CD4-positive, alpha-beta T cell (primary cell): ENCODE measurements at regions of chr16 and their contacts with region 1.

Region 1: DNA sequence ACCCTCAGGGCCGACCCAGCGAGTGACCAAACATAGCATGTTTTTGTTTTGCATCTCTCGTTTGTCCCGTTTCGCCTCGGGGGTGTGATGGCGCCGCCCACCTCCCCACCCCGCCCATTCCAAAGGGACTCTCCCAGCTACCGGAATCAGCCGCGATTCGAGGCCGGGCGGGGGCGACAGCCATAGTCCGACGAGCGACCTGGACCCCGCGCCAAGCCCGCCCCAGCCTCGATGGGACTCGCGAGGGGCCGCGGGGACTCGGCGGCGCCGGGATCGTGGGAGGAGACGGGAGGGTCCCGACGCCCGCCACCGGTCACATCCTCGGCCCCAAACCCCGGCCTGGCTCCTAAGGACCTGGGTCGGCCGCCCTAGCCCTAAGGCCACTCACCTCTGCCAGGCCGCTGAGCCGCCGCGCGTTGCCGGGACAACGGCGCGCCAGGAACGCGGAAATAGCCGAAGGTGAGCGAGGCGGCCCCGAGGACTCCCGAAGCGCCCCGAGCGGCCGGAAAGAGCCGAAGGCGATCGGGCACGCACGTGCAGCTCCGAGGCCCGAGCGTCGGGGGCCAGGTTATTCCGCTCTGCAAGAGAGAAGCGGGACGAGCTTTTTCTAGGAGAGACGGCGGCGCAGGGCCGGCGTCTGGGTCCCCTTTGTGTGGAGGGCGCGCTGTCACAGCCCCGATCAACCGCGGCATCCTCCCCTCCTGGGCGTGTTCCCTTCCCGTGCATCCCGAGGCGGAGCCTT is 1.4 kb downstream of the IFT140 start:
- DNase-seq: peak; percentile 85 to 96 (median 90)
- ATAC-seq: peak; percentile 65
- H3K4me3 ChIP-seq: peak overlapping the region; percentile 53
- H3K4me3 Mint-ChIP-seq: peak overlapping the region; percentile 72
- H3K27ac ChIP-seq: peak overlapping the region; percentile 45 to 46
- H3K27ac Mint-ChIP-seq: peak overlapping the region; percentile 89
- H3K4me1 ChIP-seq: peaks cover 44% of the 10 kb centered on the region
- H3K4me1 Mint-ChIP-seq: peaks cover 24% of the 10 kb centered on the region
- H3K27me3 ChIP-seq: peaks cover 6 to 10% of the 10 kb centered on the region in 2 experiments
- H3K27me3 Mint-ChIP-seq: peaks cover 14% of the 10 kb centered on the region
- CTCF ChIP-seq: no peak

Region 2: GRCh38 chr16:1474796-1475551 is 135.5 kb before region 1 on chr16 and contains the start of gene CLCN7:
- CTCF ChIA-PET with region 1: no interaction called
- POLR2A ChIA-PET with region 1: interaction called, 3 read pairs
- intact Hi-C with region 1: loop called in 1 of 2 experiments (anchors 5 kb)
- DNase-seq: peak; percentile 70 to 94 (median 84)
- ATAC-seq: peak; percentile 87
- H3K4me3 ChIP-seq: peak within 1 kb of the TSS; percentile 62
- H3K4me3 Mint-ChIP-seq: peak within 1 kb of the TSS; percentile 88
- H3K27ac ChIP-seq: peak within 1 kb of the TSS; percentile 72 to 84
- H3K27ac Mint-ChIP-seq: peak within 1 kb of the TSS; percentile 89
- H3K4me1 ChIP-seq: peaks cover 41% of the 10 kb centered on the region
- H3K4me1 Mint-ChIP-seq: peaks cover 43% of the 10 kb centered on the region
- H3K27me3 ChIP-seq: no peaks in the 10 kb centered on the region
- H3K27me3 Mint-ChIP-seq: no peaks in the 10 kb centered on the region
- CTCF ChIP-seq: no peak
- total RNA-seq, gene CLCN7: 70.5 to 76.2 TPM

Region 3: DNA sequence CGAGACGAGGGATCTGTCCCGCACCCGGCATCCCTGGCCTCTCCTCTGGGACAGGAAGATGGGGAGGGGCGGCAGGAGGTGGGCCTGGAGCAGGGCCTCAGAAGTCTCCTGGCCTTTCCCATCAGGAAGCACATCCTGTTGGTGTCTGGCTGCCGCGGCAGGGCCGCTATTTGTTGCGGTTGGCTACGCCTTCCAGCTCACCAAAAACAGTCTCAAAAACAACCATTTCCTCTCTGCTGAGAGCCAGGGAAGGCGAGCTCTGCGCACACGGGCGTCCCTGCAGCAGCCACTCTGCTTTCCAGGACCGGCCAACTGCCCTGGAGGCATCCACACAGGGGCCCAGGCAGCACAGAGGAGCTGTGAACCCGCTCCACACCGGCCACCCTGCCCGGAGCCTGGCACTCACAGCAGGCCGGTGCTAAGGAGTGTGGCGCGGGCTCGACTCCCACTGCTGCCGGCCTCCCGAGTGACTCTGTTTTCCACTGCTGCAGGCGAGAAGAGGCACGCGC is 77.0 kb before region 1 on chr16 and contains the start of gene TMEM204:
- CTCF ChIA-PET with region 1: no interaction called
- POLR2A ChIA-PET with region 1: interaction called, 4 read pairs
- intact Hi-C with region 1: loop called in 1 of 2 experiments (anchors 1 kb)
- DNase-seq: peak in 13 of 14 experiments; percentile 40 to 75 (median 58)
- ATAC-seq: peak; percentile 47
- H3K4me3 ChIP-seq: peak within 1 kb of the TSS; percentile 98
- H3K4me3 Mint-ChIP-seq: peak within 1 kb of the TSS; percentile 99
- H3K27ac ChIP-seq: peak within 1 kb of the TSS; percentile 55 to 56
- H3K27ac Mint-ChIP-seq: peak within 1 kb of the TSS; percentile 98
- H3K4me1 ChIP-seq: peaks cover 64% of the 10 kb centered on the region
- H3K4me1 Mint-ChIP-seq: peaks cover 59% of the 10 kb centered on the region
- H3K27me3 ChIP-seq: no peaks in the 10 kb centered on the region
- H3K27me3 Mint-ChIP-seq: no peaks in the 10 kb centered on the region
- CTCF ChIP-seq: no peak
- total RNA-seq, gene TMEM204: 20.5 to 22.1 TPM

Region 4: DNA sequence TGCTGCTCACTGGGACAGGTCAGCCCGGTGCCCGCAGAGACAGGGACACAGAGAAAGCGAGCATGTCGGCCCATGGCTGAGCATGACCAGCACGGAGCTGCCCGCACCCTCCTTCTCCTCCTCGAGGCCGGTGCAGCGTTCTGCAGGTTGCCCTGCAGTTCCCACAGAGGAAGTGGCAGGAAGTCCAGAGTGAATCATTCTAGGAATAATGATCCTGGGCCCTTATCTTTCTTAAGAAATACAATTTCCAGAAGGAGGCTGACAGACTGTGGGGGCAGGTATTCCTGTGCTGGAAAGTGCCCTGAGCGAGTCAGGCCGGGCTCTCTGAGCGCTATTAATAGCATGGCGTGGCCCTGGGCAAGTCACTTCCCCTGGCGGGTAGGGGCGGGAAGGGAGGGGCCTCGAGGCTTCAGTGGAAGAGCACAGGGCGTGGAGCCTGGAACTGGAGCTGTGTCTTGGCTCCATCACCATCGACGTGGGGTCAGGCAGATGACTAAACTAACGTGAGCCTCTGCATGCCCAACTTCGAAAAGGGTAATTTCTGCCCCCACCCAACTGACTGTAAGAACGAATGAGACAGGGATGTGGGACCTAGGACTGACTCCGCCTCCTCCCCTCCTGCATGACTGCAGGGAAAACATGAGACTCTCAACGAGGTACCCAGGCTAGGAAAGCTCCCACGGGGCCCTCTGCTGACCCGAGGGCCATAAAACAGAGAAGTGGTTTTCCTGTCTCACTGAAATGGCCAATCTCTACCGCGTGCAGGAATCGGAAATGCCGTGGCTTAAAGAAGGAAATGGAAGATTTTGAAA is 67.2 kb before region 1 on chr16:
- CTCF ChIA-PET with region 1: no interaction called
- POLR2A ChIA-PET with region 1: interaction called, 3 read pairs
- intact Hi-C with region 1: loop called in 1 of 2 experiments (anchors 2 kb)
- DNase-seq: peak in 9 of 14 experiments; percentile 24 to 76 (median 45)
- ATAC-seq: peak; percentile 66
- H3K4me3 ChIP-seq: peak overlapping the region; percentile 10
- H3K4me3 Mint-ChIP-seq: peak overlapping the region; percentile 54
- H3K27ac ChIP-seq: peak overlapping the region; percentile 56 to 58
- H3K27ac Mint-ChIP-seq: peak overlapping the region; percentile 80
- H3K4me1 ChIP-seq: peaks cover 99% of the 10 kb centered on the region
- H3K4me1 Mint-ChIP-seq: peaks cover 81% of the 10 kb centered on the region
- H3K27me3 ChIP-seq: no peaks in the 10 kb centered on the region
- H3K27me3 Mint-ChIP-seq: no peaks in the 10 kb centered on the region
- CTCF ChIP-seq: no peak

Region 5: GRCh38 chr16:1677802-1678496 is 67.5 kb after region 1 on chr16 and contains the start of gene JPT2:
- CTCF ChIA-PET with region 1: no interaction called
- POLR2A ChIA-PET with region 1: interaction called, 15 read pairs
- intact Hi-C with region 1: loop called (anchors 1 to 2 kb)
- DNase-seq: peak; percentile 90 to 98 (median 95)
- ATAC-seq: peak; percentile 97
- H3K4me3 ChIP-seq: peak within 1 kb of the TSS; percentile 66
- H3K4me3 Mint-ChIP-seq: peak within 1 kb of the TSS; percentile 93
- H3K27ac ChIP-seq: peak within 1 kb of the TSS in 1 of 2 donors; percentile 61
- H3K27ac Mint-ChIP-seq: peak within 1 kb of the TSS; percentile 71
- H3K4me1 ChIP-seq: peaks cover 25% of the 10 kb centered on the region
- H3K4me1 Mint-ChIP-seq: peaks cover 31% of the 10 kb centered on the region
- H3K27me3 ChIP-seq: no peaks in the 10 kb centered on the region
- H3K27me3 Mint-ChIP-seq: no peaks in the 10 kb centered on the region
- CTCF ChIP-seq: no peak
- total RNA-seq, gene JPT2: 2.5 to 3.2 TPM

Region 6: DNA sequence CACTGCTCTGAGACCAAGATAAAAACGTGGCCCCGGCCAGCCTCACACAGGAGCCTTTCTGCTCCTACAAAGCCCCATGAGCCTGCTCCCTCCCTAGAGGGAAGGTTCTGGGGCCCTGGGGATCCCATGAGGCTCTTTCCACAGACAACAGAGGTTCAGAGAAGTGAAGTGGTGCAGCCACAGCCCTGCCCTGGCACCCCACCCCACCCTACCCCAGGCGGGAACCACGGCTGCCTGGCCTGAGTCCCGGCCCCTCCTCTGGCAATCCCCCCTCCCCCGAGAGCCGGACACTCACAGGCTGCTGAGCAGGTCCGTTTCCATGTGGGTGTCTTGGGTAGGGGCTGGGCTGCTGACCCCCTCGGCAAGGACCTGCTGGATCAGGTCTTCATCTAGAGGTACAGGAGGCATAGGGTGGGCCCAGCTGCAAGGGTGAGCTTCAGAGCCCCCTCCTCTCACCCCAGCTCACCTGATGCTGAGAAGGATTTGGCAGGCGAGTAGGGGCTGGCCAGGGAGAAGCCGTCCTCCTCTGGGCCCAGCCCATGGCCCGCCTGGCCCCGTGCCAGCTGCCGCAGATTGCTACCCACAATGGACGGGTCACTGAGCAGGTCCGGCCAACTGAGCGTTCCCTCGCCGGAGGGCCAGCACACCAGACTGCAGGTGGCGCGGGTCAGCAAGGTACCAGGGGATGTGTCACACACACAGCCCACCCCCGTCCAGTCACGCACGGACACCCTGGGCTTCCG is 486.6 kb after region 1 on chr16:
- CTCF ChIA-PET with region 1: no interaction called
- POLR2A ChIA-PET with region 1: no interaction called
- intact Hi-C with region 1: no loop called
- DNase-seq: no peak
- ATAC-seq: no peak
- H3K4me3 ChIP-seq: no peak overlapping the region
- H3K4me3 Mint-ChIP-seq: no peak overlapping the region
- H3K27ac ChIP-seq: no peak overlapping the region
- H3K27ac Mint-ChIP-seq: no peak overlapping the region
- H3K4me1 ChIP-seq: no peaks in the 10 kb centered on the region
- H3K4me1 Mint-ChIP-seq: no peaks in the 10 kb centered on the region
- H3K27me3 ChIP-seq: no peaks in the 10 kb centered on the region
- H3K27me3 Mint-ChIP-seq: no peaks in the 10 kb centered on the region
- CTCF ChIP-seq: no peak